ENCODE measurements at regions of chr10 and their contacts with region 1.

Region 1: GRCh38 chr10:6086375-6087233 is 2.2 kb upstream of the RBM17 start:
- DNase-seq: peak; percentile 91
- H3K4me3 Mint-ChIP-seq: peak overlapping the region; percentile 45
- H3K27ac Mint-ChIP-seq: peak overlapping the region; percentile 84
- H3K4me1 Mint-ChIP-seq: peaks cover 81% of the 10 kb centered on the region
- H3K27me3 Mint-ChIP-seq: no peaks in the 10 kb centered on the region

Region 2: DNA sequence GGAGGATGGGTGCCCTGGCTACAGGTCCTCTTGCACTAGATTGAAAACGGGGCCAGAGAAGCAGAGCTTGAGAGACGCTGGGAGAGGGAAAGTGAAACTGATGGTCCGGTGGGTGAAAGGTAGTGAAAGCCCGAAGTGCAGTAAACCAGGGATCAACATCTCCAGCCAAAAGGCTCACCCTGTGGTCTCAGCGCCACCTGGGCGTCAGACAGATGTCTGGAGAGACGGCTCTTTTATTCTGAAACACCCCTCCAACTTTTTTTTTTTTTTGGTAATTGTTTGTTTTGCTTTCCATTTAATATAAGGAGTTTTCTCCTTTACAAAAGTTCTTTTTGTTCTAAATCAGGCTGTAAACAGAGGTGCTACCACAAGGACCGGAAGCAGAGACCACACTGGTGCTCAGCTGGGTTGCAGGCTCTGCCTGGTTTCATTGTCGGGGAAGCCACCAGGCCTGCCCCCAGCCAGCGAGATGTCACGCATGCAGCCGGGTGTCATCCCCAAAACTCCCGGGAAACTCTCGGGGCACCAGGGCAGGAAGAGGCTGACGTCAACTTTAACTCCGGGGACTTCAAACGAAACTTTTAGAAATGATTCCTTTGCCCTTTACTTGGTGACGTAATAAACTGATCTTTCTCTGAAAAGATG is 35.7 kb before region 1 on chr10:
- CTCF ChIA-PET with region 1: interaction called, 18 read pairs
- POLR2A ChIA-PET with region 1: interaction called, 3 read pairs
- DNase-seq: peak; percentile 96
- H3K4me3 Mint-ChIP-seq: peak overlapping the region; percentile 84
- H3K27ac Mint-ChIP-seq: peak overlapping the region; percentile 98
- H3K4me1 Mint-ChIP-seq: peaks cover 86% of the 10 kb centered on the region
- H3K27me3 Mint-ChIP-seq: no peaks in the 10 kb centered on the region

Region 3: DNA sequence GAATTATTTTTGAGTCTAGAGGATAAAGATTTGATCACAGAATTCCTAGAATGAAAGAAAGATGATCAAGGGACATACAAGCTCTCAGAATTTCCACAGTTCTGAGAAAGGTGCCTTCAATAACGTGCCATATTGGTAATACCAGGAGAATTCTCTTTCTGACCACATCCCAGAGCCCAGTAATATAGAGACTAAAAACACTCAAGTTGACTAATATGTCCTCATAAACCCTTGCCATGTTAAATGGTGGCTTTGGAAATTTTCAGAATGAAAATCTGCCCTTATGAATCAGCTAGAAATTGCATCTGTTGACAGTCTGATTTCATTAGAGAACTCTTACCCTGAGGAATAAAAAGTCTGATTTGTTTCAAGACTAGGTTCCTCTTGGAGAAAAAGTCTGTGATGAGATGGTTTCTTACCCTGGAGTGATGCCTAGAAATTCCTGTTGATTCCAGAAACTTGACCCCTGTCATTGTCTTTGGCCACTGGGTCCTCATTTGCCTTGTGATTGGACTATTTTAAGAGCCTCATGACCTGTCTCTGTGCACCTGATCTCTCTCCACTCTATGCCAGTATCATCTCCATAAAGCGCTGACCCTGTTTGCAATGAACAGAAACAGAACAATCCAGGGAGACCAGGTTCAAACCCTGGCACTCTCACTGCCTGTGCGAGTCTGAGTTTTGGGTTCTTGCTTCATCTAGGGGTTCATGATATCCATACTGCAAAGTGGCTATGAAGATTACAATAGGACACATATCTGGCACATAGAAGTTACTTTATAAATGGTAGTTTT is 27.7 kb before region 1 on chr10:
- CTCF ChIA-PET with region 1: interaction called, 18 read pairs
- POLR2A ChIA-PET with region 1: interaction called, 7 read pairs
- DNase-seq: no peak
- H3K4me3 Mint-ChIP-seq: peak overlapping the region; percentile 96
- H3K27ac Mint-ChIP-seq: peak overlapping the region; percentile 87
- H3K4me1 Mint-ChIP-seq: peaks cover 70% of the 10 kb centered on the region
- H3K27me3 Mint-ChIP-seq: no peaks in the 10 kb centered on the region

Region 4: DNA sequence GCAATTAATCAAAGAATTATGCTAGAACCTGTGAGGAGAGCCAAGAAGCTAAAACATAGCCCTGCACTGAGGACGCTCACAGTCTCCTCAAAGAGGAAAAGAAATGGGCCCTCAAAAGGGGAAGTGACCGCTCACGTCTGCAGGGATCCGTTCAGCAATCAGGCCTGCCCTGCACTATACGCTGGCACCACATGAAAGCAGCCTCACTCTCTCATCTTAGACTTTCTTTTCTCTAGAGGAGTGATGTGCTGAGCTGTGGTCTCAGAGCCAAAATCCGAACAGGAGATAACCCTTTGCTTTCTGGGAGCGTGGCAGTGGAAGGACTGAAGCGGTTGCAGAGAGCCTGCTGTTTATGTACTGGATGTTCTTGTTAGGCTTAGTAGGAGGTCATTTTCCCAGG is 18.2 kb before region 1 on chr10:
- CTCF ChIA-PET with region 1: interaction called, 83 read pairs
- POLR2A ChIA-PET with region 1: interaction called, 6 read pairs
- DNase-seq: peak; percentile 79
- H3K4me3 Mint-ChIP-seq: peak overlapping the region; percentile 71
- H3K27ac Mint-ChIP-seq: peak overlapping the region; percentile 97
- H3K4me1 Mint-ChIP-seq: peaks cover 94% of the 10 kb centered on the region
- H3K27me3 Mint-ChIP-seq: no peaks in the 10 kb centered on the region

Region 5: GRCh38 chr10:6074489-6075301 is 11.9 kb before region 1 on chr10:
- CTCF ChIA-PET with region 1: interaction called, 83 read pairs
- POLR2A ChIA-PET with region 1: interaction called, 6 read pairs
- DNase-seq: no peak
- H3K4me3 Mint-ChIP-seq: no peak overlapping the region
- H3K27ac Mint-ChIP-seq: peak overlapping the region; percentile 63
- H3K4me1 Mint-ChIP-seq: peaks cover 72% of the 10 kb centered on the region
- H3K27me3 Mint-ChIP-seq: peaks cover 2% of the 10 kb centered on the region

Region 6: DNA sequence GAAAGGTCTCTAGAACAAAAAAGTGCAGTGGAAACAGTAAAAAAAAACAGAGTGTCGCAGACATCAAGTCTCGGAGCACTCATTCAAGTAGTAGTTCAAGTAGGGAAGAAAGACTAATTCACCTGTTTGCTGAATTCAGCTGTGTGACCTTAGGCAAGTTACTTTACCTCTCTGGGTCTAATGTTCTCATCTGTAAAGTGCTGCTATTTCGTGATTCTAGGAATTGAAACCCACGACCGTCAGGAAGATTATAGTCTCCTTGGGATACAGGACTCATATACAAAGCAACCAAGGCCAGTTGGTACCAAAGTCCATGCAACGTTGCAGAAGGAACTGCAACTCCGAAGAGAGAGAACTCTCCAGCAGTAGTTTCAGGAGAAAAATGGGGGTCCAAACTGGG is 467.3 kb after region 1 on chr10:
- CTCF ChIA-PET with region 1: no interaction called
- POLR2A ChIA-PET with region 1: no interaction called
- DNase-seq: no peak
- H3K4me3 Mint-ChIP-seq: no peak overlapping the region
- H3K27ac Mint-ChIP-seq: no peak overlapping the region
- H3K4me1 Mint-ChIP-seq: peaks cover 78% of the 10 kb centered on the region
- H3K27me3 Mint-ChIP-seq: no peaks in the 10 kb centered on the region